Spleen (tissue), 13 donors: ENCODE measurements at regions of chr11 and their contacts with region 1.

Region 1: GRCh38 chr11:128039140-128040021 is 548.0 kb downstream of the ETS1 start:
- DNase-seq: peak; percentile 91
- H3K4me3 ChIP-seq: peak overlapping the region in 1 of 8 donors; percentile 40
- H3K27ac ChIP-seq: peak overlapping the region; percentile 29 to 86 (median 73)
- H3K4me1 ChIP-seq: peaks cover 5 to 61% (median 27%) of the 10 kb centered on the region in 6 donors
- H3K27me3 ChIP-seq: no peaks in the 10 kb centered on the region
- CTCF ChIP-seq: peak in 3 of 11 experiments; percentile 15 to 21 (median 16)
- POLR2A ChIP-seq: no peak

Region 2: DNA sequence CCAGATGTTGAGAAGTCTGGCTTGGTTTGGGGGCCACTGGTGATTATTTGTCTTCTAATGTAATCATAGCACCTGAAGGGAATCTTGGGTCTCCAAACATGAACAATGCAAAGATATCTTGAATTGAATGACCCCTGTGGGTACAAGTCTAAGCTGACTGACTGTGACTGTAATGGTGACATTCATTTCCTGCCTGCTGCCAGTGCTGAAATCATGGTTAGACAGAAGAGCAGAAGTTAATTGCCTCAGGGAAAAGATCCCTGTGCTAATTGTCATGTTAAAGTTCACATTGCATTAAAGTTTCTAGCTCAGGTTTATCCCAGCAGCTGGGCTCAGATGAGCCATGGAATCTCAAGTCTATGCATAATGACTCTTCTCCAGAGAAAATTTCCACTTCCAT is 224.1 kb before region 1 on chr11:
- intact Hi-C with region 1: no loop called
- DNase-seq: no peak
- H3K4me3 ChIP-seq: no peak overlapping the region
- H3K27ac ChIP-seq: no peak overlapping the region
- H3K4me1 ChIP-seq: no peaks in the 10 kb centered on the region
- H3K27me3 ChIP-seq: no peaks in the 10 kb centered on the region
- CTCF ChIP-seq: no peak
- POLR2A ChIP-seq: no peak

Region 3: GRCh38 chr11:128157423-128158298 is 118.3 kb after region 1 on chr11:
- intact Hi-C with region 1: loop called (anchors 5 kb)
- DNase-seq: no peak
- H3K4me3 ChIP-seq: peak overlapping the region in 2 of 8 donors; percentile 19 to 57
- H3K27ac ChIP-seq: peak overlapping the region in 1 of 8 donors; percentile 44
- H3K4me1 ChIP-seq: peaks cover 0 to 28% (median 10%) of the 10 kb centered on the region in 6 donors
- H3K27me3 ChIP-seq: no peaks in the 10 kb centered on the region
- CTCF ChIP-seq: peak; percentile 63 to 93 (median 83)
- POLR2A ChIP-seq: no peak